KBM-7 (cell line): ENCODE measurements at regions of chr2 and their contacts with region 1.

Region 1: GRCh38 chr2:98649135-98649991 is 41.0 kb downstream of the UNC50 start:
- DNase-seq: peak; percentile 92

Region 2: DNA sequence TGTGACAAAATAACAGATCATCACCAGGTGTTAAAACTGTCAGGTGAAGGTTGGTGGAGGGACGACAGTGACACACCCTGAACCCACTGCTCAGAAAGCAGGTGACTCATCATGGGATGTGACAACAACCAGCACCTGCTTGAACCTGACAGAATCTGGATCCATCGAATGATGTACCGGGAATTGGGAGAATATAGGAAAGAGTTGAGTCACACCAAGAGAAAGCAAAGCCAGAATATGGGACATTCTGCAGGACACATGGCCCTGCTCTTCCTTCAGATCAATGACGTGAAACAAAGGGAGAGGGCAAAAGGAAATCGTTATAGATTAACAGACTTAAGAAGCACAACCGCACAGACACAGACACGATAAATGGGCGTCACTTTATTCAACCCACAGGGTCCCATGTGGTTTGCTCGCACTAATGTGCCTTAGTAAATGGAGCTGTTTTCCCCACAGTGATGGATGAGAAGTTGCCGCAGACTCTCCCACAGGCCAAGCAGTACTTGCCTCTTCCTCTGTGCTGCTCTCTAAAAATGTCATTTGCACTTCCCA is 186.5 kb after region 1 on chr2:
- in situ Hi-C with region 1: loop called (anchors 25 kb)
- DNase-seq: peak; percentile 13

Region 3: DNA sequence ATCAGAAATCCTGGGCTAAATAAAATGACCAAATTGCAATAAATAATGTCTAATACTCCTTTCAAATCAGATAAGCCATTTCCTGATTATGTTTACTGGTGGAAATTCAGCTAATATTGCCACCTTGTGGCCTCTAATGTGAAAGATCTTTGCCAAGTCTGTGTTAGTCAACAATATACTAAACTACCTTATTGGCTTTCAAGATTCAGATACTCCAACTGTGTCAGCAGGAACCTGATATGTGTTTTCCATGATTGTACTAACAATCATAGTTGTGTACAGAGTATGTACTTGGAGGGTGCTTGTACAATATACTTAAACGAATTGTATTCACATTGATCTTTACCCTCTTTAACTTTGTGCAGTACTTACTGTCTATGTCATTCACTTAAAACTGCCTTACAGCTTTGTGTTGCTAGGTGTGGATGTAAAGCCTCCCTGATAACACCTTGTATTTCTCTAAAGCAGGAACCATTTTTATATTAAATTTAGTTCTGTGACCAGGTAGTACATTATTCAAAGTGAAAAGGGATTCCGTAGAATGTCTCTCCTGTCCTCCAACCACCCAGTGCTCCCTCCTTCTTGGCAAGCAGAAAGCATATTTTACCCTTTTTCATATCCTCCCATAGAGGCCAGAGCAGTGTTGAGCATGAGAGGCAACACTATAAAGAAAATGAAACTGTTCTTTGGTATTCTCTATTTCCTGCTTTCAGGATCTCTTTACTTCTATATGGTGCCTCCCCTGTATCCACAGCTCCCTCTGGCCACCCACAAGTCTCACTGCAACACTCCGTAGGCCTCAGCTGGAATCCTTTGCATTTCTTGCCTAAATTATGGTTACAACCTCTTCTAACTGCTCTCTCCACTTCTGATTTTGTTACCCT is 417.0 kb after region 1 on chr2:
- in situ Hi-C with region 1: loop called (anchors 25 kb)
- DNase-seq: peak; percentile 51